ENCODE measurements at regions of chr17 and their contacts with region 1.

Region 1: DNA sequence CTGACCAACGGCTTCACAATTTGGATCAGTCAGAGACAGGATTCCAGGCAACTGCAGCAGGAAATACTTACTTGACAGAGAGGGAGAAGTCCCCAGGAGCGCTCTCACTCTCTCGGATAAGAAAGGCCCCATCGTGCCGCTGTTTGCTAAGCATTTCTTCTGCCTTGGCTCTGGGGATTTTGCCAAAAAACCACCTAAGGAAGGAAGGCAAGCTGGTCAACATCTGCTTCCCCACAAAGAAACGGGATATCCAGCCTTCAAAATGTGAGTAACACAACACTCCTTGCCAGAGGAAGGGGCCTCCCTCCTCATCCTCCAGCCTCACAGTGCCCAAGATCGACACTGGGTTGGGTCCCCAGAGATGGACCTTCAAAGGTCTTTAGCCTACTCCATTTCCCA is 36.6 kb upstream of the SLC25A19 start:
- DNase-seq: peak; percentile 68 to 89 (median 85)
- H3K4me3 ChIP-seq: peak overlapping the region in 6 of 7 experiments; percentile 1 to 51 (median 38)
- H3K27ac ChIP-seq: peak overlapping the region; percentile 62 to 79
- H3K4me1 ChIP-seq: peaks cover 19 to 63% (median 54%) of the 10 kb centered on the region in 4 experiments
- H3K27me3 ChIP-seq: no peaks in the 10 kb centered on the region

Region 2: DNA sequence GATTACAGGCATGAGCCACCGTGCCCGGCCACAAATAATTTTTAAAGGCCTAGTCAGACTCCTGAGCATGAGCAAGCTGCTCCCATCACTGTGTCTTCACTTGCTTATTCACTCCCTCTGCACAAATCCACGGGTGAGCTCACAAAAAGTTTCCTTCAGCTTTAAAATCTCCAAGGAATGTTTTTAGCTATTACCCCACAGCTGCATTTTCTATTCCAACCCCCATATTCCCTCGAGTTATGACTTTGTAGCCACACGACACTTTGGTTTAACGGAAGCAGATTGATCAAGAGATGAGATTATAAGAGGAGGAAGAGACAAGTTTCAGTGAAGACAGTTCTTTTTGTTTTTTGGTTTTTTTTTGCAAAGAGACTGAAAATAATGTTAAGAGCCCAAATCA is 12.5 kb after region 1 on chr17:
- CTCF ChIA-PET with region 1: interaction called, 32 read pairs
- POLR2A ChIA-PET with region 1: interaction called, 6 read pairs
- DNase-seq: peak in 2 of 3 donors; percentile 64 to 74
- H3K4me3 ChIP-seq: peak overlapping the region in 6 of 7 experiments; percentile 22 to 50 (median 42)
- H3K27ac ChIP-seq: peak overlapping the region; percentile 18 to 82
- H3K4me1 ChIP-seq: peaks cover 38 to 90% (median 80%) of the 10 kb centered on the region in 4 experiments
- H3K27me3 ChIP-seq: no peaks in the 10 kb centered on the region

Region 3: GRCh38 chr17:75405365-75406221 is 79.8 kb after region 1 on chr17 and contains the start of gene GRB2:
- CTCF ChIA-PET with region 1: interaction called, 26 read pairs
- POLR2A ChIA-PET with region 1: interaction called, 3 read pairs
- DNase-seq: peak; percentile 97 to 98 (median 98)
- H3K4me3 ChIP-seq: peak within 1 kb of the TSS; percentile 93 to 100 (median 98)
- H3K27ac ChIP-seq: peak within 1 kb of the TSS; percentile 85 to 90
- H3K4me1 ChIP-seq: peaks cover 18 to 52% (median 37%) of the 10 kb centered on the region in 4 experiments
- H3K27me3 ChIP-seq: no peaks in the 10 kb centered on the region

Region 4: GRCh38 chr17:75412455-75413317 is 86.9 kb after region 1 on chr17:
- CTCF ChIA-PET with region 1: interaction called, 30 read pairs
- POLR2A ChIA-PET with region 1: interaction called, 4 read pairs
- DNase-seq: peak; percentile 83 to 93 (median 88)
- H3K4me3 ChIP-seq: peak overlapping the region in 3 of 7 experiments; percentile 30 to 63 (median 32)
- H3K27ac ChIP-seq: no peak overlapping the region
- H3K4me1 ChIP-seq: peaks cover 3 to 38% (median 28%) of the 10 kb centered on the region in 4 experiments
- H3K27me3 ChIP-seq: no peaks in the 10 kb centered on the region